ENCODE measurements at regions of chr17 and their contacts with region 1.

Region 1: GRCh38 chr17:36148559-36149295 is 27.7 kb downstream of the TBC1D3B start:
- DNase-seq: peak; percentile 76
- ATAC-seq: peak; percentile 97
- H3K4me3 Mint-ChIP-seq: peak overlapping the region; percentile 35
- H3K27ac Mint-ChIP-seq: no peak overlapping the region
- H3K4me1 Mint-ChIP-seq: peaks cover 37% of the 10 kb centered on the region
- H3K27me3 Mint-ChIP-seq: peaks cover 10% of the 10 kb centered on the region
- CTCF ChIP-seq: peak; percentile 100

Region 2: GRCh38 chr17:35953720-35954119 is 195.0 kb before region 1 on chr17:
- CTCF ChIA-PET with region 1: interaction called, 10 read pairs
- POLR2A ChIA-PET with region 1: no interaction called
- intact Hi-C with region 1: no loop called
- DNase-seq: no peak
- ATAC-seq: no peak
- H3K4me3 Mint-ChIP-seq: no peak overlapping the region
- H3K27ac Mint-ChIP-seq: no peak overlapping the region
- H3K4me1 Mint-ChIP-seq: no peaks in the 10 kb centered on the region
- H3K27me3 Mint-ChIP-seq: peaks cover 7% of the 10 kb centered on the region
- CTCF ChIP-seq: no peak

Region 3: GRCh38 chr17:35981908-35982330 is 166.8 kb before region 1 on chr17:
- CTCF ChIA-PET with region 1: interaction called, 299 read pairs
- POLR2A ChIA-PET with region 1: interaction called, 3 read pairs
- intact Hi-C with region 1: no loop called
- DNase-seq: peak; percentile 30
- ATAC-seq: no peak
- H3K4me3 Mint-ChIP-seq: no peak overlapping the region
- H3K27ac Mint-ChIP-seq: no peak overlapping the region
- H3K4me1 Mint-ChIP-seq: no peaks in the 10 kb centered on the region
- H3K27me3 Mint-ChIP-seq: no peaks in the 10 kb centered on the region
- CTCF ChIP-seq: peak; percentile 41

Region 4: DNA sequence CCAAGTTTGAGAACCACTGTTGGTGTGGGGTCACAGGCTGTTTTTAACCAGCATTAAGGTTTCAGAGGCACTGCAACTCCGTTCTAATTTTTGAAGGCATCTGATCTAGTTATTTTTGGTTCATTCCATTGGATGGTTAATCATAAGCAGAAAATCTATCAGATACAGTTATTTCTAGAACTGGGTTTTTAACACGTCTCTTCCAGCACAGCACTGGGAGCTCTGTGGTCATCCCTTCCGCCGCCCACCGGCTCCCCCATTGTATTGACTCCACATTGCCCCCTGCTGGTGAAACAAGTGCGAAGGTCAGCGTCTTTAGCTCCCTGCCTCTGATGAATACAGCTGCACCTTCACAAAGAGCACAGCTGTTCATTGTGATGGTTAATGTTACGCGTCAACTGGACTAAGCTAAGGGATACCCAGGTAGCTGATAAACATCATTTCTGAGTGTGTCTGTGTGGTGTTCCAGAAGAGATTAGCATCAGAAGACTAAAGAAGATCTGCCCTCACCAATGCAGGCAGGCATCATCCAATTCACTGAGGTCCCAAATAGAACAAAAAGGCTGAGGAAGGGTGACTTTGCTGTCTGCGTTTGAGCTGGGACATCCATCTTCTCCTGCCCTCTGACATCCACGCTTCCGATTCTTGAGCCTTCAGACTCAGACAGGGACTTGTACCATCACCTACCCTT is 76.2 kb before region 1 on chr17:
- CTCF ChIA-PET with region 1: interaction called, 60 read pairs
- POLR2A ChIA-PET with region 1: interaction called, 4 read pairs
- intact Hi-C with region 1: no loop called
- DNase-seq: peak; percentile 89
- ATAC-seq: peak; percentile 85
- H3K4me3 Mint-ChIP-seq: no peak overlapping the region
- H3K27ac Mint-ChIP-seq: peak overlapping the region; percentile 82
- H3K4me1 Mint-ChIP-seq: peaks cover 49% of the 10 kb centered on the region
- H3K27me3 Mint-ChIP-seq: peaks cover 2% of the 10 kb centered on the region
- CTCF ChIP-seq: peak; percentile 90

Region 5: GRCh38 chr17:36105781-36106492 is 42.8 kb before region 1 on chr17:
- CTCF ChIA-PET with region 1: interaction called, 10 read pairs
- POLR2A ChIA-PET with region 1: no interaction called
- intact Hi-C with region 1: no loop called
- DNase-seq: no peak
- ATAC-seq: no peak
- H3K4me3 Mint-ChIP-seq: peak overlapping the region; percentile 75
- H3K27ac Mint-ChIP-seq: peak overlapping the region; percentile 88
- H3K4me1 Mint-ChIP-seq: peaks cover 33% of the 10 kb centered on the region
- H3K27me3 Mint-ChIP-seq: peaks cover 8% of the 10 kb centered on the region
- CTCF ChIP-seq: no peak

Region 6: GRCh38 chr17:36117505-36118382 is 31.0 kb before region 1 on chr17:
- CTCF ChIA-PET with region 1: interaction called, 19 read pairs
- POLR2A ChIA-PET with region 1: interaction called, 3 read pairs
- intact Hi-C with region 1: no loop called
- DNase-seq: peak; percentile 67
- ATAC-seq: peak; percentile 89
- H3K4me3 Mint-ChIP-seq: peak overlapping the region; percentile 31
- H3K27ac Mint-ChIP-seq: peak overlapping the region; percentile 89
- H3K4me1 Mint-ChIP-seq: peaks cover 37% of the 10 kb centered on the region
- H3K27me3 Mint-ChIP-seq: no peaks in the 10 kb centered on the region
- CTCF ChIP-seq: no peak

Region 7: GRCh38 chr17:36133602-36134236 is 15.0 kb before region 1 on chr17:
- CTCF ChIA-PET with region 1: interaction called, 24 read pairs
- POLR2A ChIA-PET with region 1: no interaction called
- intact Hi-C with region 1: no loop called
- DNase-seq: no peak
- ATAC-seq: no peak
- H3K4me3 Mint-ChIP-seq: no peak overlapping the region
- H3K27ac Mint-ChIP-seq: no peak overlapping the region
- H3K4me1 Mint-ChIP-seq: peaks cover 2% of the 10 kb centered on the region
- H3K27me3 Mint-ChIP-seq: peaks cover 6% of the 10 kb centered on the region
- CTCF ChIP-seq: no peak

Measured in activated CD8-positive, alpha-beta T cell treated with anti-CD3 and anti-CD28 coated beads for 36 hours (primary cell).